ENCODE measurements at regions of chr6 and their contacts with region 1.

Region 1: DNA sequence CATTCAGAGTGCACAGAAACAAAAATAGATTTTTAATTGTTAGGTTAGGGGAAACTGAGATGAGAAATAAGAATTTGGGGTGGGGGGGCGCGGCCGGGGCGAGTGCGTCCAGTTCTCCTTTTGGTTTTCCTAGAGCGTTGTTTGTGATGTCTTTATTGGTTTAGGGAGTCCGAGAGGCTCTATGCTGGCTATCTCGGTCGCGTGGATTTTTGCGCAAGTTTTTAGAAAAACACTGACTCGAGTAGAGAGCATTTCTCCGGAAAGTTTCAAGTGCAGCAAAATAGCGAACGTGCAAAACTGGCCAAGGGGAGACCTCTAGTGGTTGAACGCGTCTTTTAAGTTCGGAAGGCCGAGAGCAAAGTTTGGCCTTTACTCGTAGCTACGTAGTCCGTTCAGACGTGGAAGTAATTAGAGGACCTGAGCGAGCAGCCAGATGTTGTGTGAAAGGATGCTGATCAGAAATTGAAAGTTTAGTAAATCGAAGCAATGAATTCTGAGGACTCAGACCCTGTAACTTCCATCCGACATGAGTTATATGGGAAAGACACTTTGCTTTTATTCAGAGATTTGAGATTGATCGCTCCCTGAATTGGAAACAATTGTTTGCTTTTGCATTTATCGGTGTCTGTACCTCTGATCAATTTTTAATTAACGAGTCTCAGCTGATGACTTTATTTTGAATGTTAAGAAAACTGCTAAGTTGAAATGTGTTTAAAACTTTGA is 2.7 kb downstream of the L3MBTL3 start:
- DNase-seq: peak; percentile 80 to 84 (median 82)
- H3K4me3 ChIP-seq: peak overlapping the region; percentile 49 to 54
- H3K4me3 Mint-ChIP-seq: peak overlapping the region; percentile 97 to 99 (median 98)
- H3K27ac ChIP-seq: peak overlapping the region; percentile 72
- H3K27ac Mint-ChIP-seq: peak overlapping the region; percentile 94 to 98 (median 97)
- H3K4me1 ChIP-seq: peaks cover 18% of the 10 kb centered on the region
- H3K4me1 Mint-ChIP-seq: peaks cover 23 to 55% (median 27%) of the 10 kb centered on the region in 4 donors
- H3K27me3 ChIP-seq: no peaks in the 10 kb centered on the region
- H3K27me3 Mint-ChIP-seq: peaks cover 0 to 2% of the 10 kb centered on the region in 2 donors

Region 2: DNA sequence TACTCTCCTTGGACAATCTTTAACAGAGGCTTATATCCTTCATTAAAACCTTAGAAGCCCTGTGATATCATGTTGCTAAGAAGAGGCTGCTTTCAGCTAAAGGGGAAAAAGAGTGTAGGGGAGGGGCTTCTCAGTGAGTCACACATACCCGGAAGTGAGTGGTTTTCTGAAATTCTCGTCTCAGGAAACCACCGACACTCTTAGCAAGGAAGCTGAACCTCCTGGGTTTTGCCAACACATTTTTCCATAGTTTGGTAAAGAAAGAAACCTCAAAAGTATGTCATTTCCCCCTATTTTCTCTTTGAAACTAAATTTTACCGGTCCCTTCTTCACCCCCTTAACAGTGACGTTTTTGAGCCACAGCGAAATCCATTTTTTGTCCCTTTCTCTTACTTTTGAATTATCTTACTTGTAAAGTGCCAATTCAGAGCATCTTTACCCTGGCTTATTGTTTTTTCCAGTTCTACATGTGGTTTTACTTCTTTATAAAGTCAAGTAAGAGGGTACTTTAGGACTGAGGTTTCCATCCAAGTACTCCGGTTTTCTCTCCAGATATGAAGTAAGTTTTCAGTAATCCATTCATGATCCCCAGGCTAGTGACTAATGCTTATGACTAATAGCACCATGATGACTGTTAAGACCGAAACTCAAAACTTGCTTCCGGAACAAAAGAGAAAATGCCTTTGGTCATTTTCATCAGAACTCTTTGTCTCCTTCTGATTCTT is 530.4 kb before region 1 on chr6:
- CTCF ChIA-PET with region 1: interaction called, 4 read pairs
- POLR2A ChIA-PET with region 1: no interaction called
- intact Hi-C with region 1: loop called (anchors 2 kb)
- DNase-seq: peak; percentile 75 to 90 (median 80)
- H3K4me3 ChIP-seq: peak overlapping the region; percentile 19 to 39
- H3K4me3 Mint-ChIP-seq: peak overlapping the region; percentile 76 to 92 (median 85)
- H3K27ac ChIP-seq: peak overlapping the region; percentile 84
- H3K27ac Mint-ChIP-seq: peak overlapping the region; percentile 87 to 98 (median 96)
- H3K4me1 ChIP-seq: peaks cover 25% of the 10 kb centered on the region
- H3K4me1 Mint-ChIP-seq: peaks cover 20 to 33% (median 27%) of the 10 kb centered on the region in 4 donors
- H3K27me3 ChIP-seq: no peaks in the 10 kb centered on the region
- H3K27me3 Mint-ChIP-seq: no peaks in the 10 kb centered on the region

Region 3: GRCh38 chr6:129672881-129673643 is 348.0 kb before region 1 on chr6:
- CTCF ChIA-PET with region 1: interaction called, 4 read pairs
- POLR2A ChIA-PET with region 1: interaction called, 5 read pairs
- intact Hi-C with region 1: loop called (anchors 1 kb)
- DNase-seq: peak; percentile 18 to 48 (median 19)
- H3K4me3 ChIP-seq: peak overlapping the region in 1 of 2 donors; percentile 53
- H3K4me3 Mint-ChIP-seq: peak overlapping the region; percentile 80 to 87 (median 82)
- H3K27ac ChIP-seq: peak overlapping the region; percentile 56
- H3K27ac Mint-ChIP-seq: peak overlapping the region; percentile 74 to 94 (median 92)
- H3K4me1 ChIP-seq: peaks cover 32% of the 10 kb centered on the region
- H3K4me1 Mint-ChIP-seq: peaks cover 29 to 31% (median 29%) of the 10 kb centered on the region in 4 donors
- H3K27me3 ChIP-seq: no peaks in the 10 kb centered on the region
- H3K27me3 Mint-ChIP-seq: no peaks in the 10 kb centered on the region

Region 4: DNA sequence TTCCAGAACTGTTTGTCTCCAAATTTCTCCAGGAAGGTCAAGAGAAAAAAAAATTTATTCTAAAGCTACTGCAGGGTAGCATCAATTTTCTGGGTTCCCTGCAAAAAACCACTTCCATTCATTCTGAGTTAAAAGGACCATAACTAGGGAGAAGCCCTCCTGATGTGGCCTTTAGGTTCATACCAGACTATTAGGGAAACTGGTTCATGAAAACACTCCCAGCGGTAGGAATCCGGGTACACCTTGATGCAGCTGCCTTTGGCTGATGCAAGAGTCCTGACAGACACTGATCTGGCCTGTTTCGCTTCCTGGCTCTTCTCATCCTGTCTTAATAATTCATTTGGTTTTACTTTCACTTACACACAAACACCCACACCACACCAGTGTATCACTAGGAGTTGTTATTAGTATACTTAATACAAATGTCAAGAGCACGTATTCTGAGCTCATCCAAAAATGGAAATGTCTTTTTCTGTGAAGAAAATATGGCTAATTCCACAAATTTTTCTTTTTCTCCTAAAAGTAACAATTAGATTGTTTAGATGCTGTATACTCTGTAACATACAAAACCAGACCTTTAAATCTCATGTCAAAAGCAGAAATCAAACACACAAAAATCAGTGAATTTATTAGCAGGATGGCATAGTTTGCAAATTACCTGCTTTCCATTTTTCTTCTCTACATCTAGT is 272.7 kb before region 1 on chr6:
- CTCF ChIA-PET with region 1: interaction called, 11 read pairs
- POLR2A ChIA-PET with region 1: interaction called, 33 read pairs
- intact Hi-C with region 1: loop called (anchors 1 kb)
- DNase-seq: peak; percentile 56 to 71 (median 60)
- H3K4me3 ChIP-seq: peak overlapping the region; percentile 12 to 68
- H3K4me3 Mint-ChIP-seq: peak overlapping the region; percentile 73 to 93 (median 86)
- H3K27ac ChIP-seq: peak overlapping the region; percentile 59
- H3K27ac Mint-ChIP-seq: peak overlapping the region; percentile 85 to 97 (median 96)
- H3K4me1 ChIP-seq: peaks cover 61% of the 10 kb centered on the region
- H3K4me1 Mint-ChIP-seq: peaks cover 42 to 61% (median 55%) of the 10 kb centered on the region in 4 donors
- H3K27me3 ChIP-seq: no peaks in the 10 kb centered on the region
- H3K27me3 Mint-ChIP-seq: no peaks in the 10 kb centered on the region

Region 5: GRCh38 chr6:129893640-129894039 is 127.4 kb before region 1 on chr6:
- CTCF ChIA-PET with region 1: interaction called, 21 read pairs
- POLR2A ChIA-PET with region 1: interaction called, 4 read pairs
- intact Hi-C with region 1: loop called (anchors 1 kb)
- DNase-seq: peak in 3 of 5 donors; percentile 19 to 30 (median 20)
- H3K4me3 ChIP-seq: no peak overlapping the region
- H3K4me3 Mint-ChIP-seq: no peak overlapping the region
- H3K27ac ChIP-seq: no peak overlapping the region
- H3K27ac Mint-ChIP-seq: no peak overlapping the region
- H3K4me1 ChIP-seq: no peaks in the 10 kb centered on the region
- H3K4me1 Mint-ChIP-seq: peaks cover 0 to 6% (median 4%) of the 10 kb centered on the region in 4 donors
- H3K27me3 ChIP-seq: no peaks in the 10 kb centered on the region
- H3K27me3 Mint-ChIP-seq: peaks cover 0 to 2% of the 10 kb centered on the region in 2 donors

Region 6: GRCh38 chr6:130037207-130037811 is 16.2 kb after region 1 on chr6:
- CTCF ChIA-PET with region 1: interaction called, 13 read pairs
- POLR2A ChIA-PET with region 1: no interaction called
- intact Hi-C with region 1: no loop called
- DNase-seq: peak in 4 of 5 donors; percentile 21 to 38 (median 27)
- H3K4me3 ChIP-seq: no peak overlapping the region
- H3K4me3 Mint-ChIP-seq: no peak overlapping the region
- H3K27ac ChIP-seq: no peak overlapping the region
- H3K27ac Mint-ChIP-seq: no peak overlapping the region
- H3K4me1 ChIP-seq: peaks cover 54% of the 10 kb centered on the region
- H3K4me1 Mint-ChIP-seq: peaks cover 40 to 67% (median 58%) of the 10 kb centered on the region in 4 donors
- H3K27me3 ChIP-seq: no peaks in the 10 kb centered on the region
- H3K27me3 Mint-ChIP-seq: no peaks in the 10 kb centered on the region

Region 7: GRCh38 chr6:130229645-130230044 is 208.6 kb after region 1 on chr6:
- CTCF ChIA-PET with region 1: no interaction called
- POLR2A ChIA-PET with region 1: no interaction called
- intact Hi-C with region 1: no loop called
- DNase-seq: peak in 2 of 5 donors; percentile 32 to 33
- H3K4me3 ChIP-seq: no peak overlapping the region
- H3K4me3 Mint-ChIP-seq: peak overlapping the region in 1 of 8 donors; percentile 33
- H3K27ac ChIP-seq: no peak overlapping the region
- H3K27ac Mint-ChIP-seq: peak overlapping the region in 1 of 7 donors; percentile 70
- H3K4me1 ChIP-seq: no peaks in the 10 kb centered on the region
- H3K4me1 Mint-ChIP-seq: peaks cover 2 to 13% (median 6%) of the 10 kb centered on the region in 4 donors
- H3K27me3 ChIP-seq: no peaks in the 10 kb centered on the region
- H3K27me3 Mint-ChIP-seq: no peaks in the 10 kb centered on the region

Measured in CD4-positive, alpha-beta memory T cell (primary cell).